ENCODE measurements at regions of chr1 and their contacts with region 1.

Region 1: DNA sequence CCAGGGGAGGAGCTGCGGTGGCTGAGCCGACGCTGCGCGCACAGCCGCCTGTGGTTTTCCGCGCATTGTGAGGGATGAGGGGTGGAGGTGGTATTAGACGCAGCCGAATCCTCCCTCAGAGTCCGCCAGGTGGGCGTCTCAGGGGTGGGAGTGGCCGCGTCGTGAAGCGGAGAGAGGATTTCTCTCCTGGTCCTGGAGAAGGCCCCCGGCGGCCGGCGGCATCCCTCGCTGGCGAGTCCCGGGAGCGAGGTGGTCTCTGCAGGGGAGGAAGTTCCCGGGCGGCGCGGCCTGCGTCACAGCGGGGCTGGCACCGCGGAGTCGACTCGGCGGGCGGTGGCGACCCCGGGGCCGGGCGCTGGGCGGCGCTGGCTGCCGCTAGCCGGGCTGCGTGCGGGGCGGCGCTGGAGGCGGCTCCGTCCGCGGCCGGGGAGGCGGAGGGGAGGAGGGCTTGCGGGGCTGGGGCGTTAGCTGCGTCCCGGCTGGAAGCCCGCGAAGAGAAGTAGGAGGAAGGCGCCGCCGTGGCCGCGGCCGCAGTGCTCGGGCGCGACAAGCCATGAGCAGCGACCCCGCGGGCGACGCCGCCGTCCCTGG is at the start of gene LRRC8C:
- DNase-seq: peak; percentile 87 to 93 (median 91)
- H3K4me3 ChIP-seq: peak within 1 kb of the TSS; percentile 67 to 97 (median 87)
- H3K27ac ChIP-seq: peak within 1 kb of the TSS; percentile 56 to 80
- H3K4me1 ChIP-seq: peaks cover 0 to 42% (median 21%) of the 10 kb centered on the region in 4 experiments
- H3K27me3 ChIP-seq: no peaks in the 10 kb centered on the region

Region 2: GRCh38 chr1:89615676-89616598 is 16.8 kb before region 1 on chr1:
- CTCF ChIA-PET with region 1: interaction called, 61 read pairs
- POLR2A ChIA-PET with region 1: no interaction called
- DNase-seq: peak; percentile 50 to 65 (median 61)
- H3K4me3 ChIP-seq: no peak overlapping the region
- H3K27ac ChIP-seq: no peak overlapping the region
- H3K4me1 ChIP-seq: no peaks in the 10 kb centered on the region
- H3K27me3 ChIP-seq: no peaks in the 10 kb centered on the region

Region 3: GRCh38 chr1:89757532-89757931 is 124.8 kb after region 1 on chr1:
- CTCF ChIA-PET with region 1: interaction called, 135 read pairs
- POLR2A ChIA-PET with region 1: interaction called, 13 read pairs
- DNase-seq: peak; percentile 57 to 90 (median 82)
- H3K4me3 ChIP-seq: peak overlapping the region in 5 of 7 experiments; percentile 8 to 63 (median 52)
- H3K27ac ChIP-seq: no peak overlapping the region
- H3K4me1 ChIP-seq: peaks cover 14 to 82% (median 30%) of the 10 kb centered on the region in 4 experiments
- H3K27me3 ChIP-seq: no peaks in the 10 kb centered on the region

Region 4: DNA sequence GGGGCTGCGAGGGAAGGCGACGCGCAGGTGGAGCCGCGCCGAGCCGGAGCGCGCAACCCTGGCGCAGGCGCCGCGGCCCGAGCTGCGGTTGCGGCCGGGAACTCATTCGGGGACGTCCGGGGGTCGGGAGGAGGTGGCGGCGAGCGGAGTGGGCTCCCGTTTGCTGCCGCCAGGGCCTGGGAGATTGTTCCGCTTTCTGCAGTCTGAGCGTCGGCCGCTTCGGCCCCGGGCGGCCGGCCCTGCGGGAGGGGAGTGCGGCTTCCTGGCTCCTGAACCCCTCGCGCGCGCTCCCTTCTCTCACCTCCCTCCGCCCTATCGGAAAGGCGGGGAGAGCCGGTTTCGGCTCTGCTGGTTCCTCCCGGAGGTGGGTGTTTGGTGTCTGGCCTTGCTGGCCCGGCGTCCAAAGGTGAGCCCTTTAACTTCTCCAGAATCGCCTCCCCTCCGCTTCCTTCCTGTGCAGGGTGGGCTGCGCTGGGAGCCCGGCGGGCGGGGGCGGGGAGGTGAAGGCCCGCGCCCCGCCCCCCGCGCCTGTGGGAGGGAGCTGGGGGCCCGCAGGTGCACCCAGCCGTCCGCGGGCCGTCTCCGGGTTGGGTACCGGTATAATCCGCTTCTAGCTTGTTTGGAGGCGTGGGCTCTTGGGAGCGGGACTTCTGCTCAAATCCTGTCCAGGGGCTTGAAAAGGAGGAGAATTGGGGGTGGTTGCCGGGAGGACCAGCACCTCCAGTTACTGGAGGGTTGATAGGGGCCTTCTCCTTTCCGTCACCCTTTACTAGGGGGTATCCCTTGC is 188.8 kb after region 1 on chr1:
- CTCF ChIA-PET with region 1: no interaction called
- POLR2A ChIA-PET with region 1: no interaction called
- DNase-seq: peak; percentile 88 to 96 (median 95)
- H3K4me3 ChIP-seq: peak overlapping the region; percentile 48 to 86 (median 78)
- H3K27ac ChIP-seq: peak overlapping the region in 1 of 2 experiments; percentile 78
- H3K4me1 ChIP-seq: peaks cover 26 to 49% (median 34%) of the 10 kb centered on the region in 4 experiments
- H3K27me3 ChIP-seq: no peaks in the 10 kb centered on the region

Measured in common myeloid progenitor, CD34-positive (primary cell).